Activated T-helper 2 cell treated with anti-CD3 and anti-CD28 coated beads, Interferon-gamma antibody, Interleukin-2, Interleukin-4, amounts not matched to agents 10 μg/mL and 5 μg/mL and 100 μg/mL, durations not matched to agents 14 hours and 24 hours and 36 hours (primary cell): ENCODE measurements at regions of chr11 and their contacts with region 1.

Region 1: GRCh38 chr11:9613118-9613829 is 39.8 kb downstream of the WEE1 start:
- DNase-seq: peak; percentile 81
- H3K4me3 Mint-ChIP-seq: peak overlapping the region; percentile 72
- H3K27ac Mint-ChIP-seq: peak overlapping the region; percentile 98
- H3K4me1 Mint-ChIP-seq: peaks cover 42% of the 10 kb centered on the region
- H3K27me3 Mint-ChIP-seq: no peaks in the 10 kb centered on the region

Region 2: GRCh38 chr11:9534791-9535781 is 78.2 kb before region 1 on chr11:
- intact Hi-C with region 1: loop called (anchors 1 kb)
- DNase-seq: peak; percentile 57
- H3K4me3 Mint-ChIP-seq: no peak overlapping the region
- H3K27ac Mint-ChIP-seq: no peak overlapping the region
- H3K4me1 Mint-ChIP-seq: no peaks in the 10 kb centered on the region
- H3K27me3 Mint-ChIP-seq: no peaks in the 10 kb centered on the region

Region 3: GRCh38 chr11:9573052-9573774 is 40.1 kb before region 1 on chr11 and contains the start of gene WEE1:
- intact Hi-C with region 1: loop called (anchors 1 kb)
- DNase-seq: peak; percentile 98
- H3K4me3 Mint-ChIP-seq: peak within 1 kb of the TSS; percentile 91
- H3K27ac Mint-ChIP-seq: peak within 1 kb of the TSS; percentile 89
- H3K4me1 Mint-ChIP-seq: peaks cover 36% of the 10 kb centered on the region
- H3K27me3 Mint-ChIP-seq: peaks cover 2% of the 10 kb centered on the region
- total RNA-seq, gene WEE1: 48.6 and 49.6 TPM in 2 replicates

Region 4: DNA sequence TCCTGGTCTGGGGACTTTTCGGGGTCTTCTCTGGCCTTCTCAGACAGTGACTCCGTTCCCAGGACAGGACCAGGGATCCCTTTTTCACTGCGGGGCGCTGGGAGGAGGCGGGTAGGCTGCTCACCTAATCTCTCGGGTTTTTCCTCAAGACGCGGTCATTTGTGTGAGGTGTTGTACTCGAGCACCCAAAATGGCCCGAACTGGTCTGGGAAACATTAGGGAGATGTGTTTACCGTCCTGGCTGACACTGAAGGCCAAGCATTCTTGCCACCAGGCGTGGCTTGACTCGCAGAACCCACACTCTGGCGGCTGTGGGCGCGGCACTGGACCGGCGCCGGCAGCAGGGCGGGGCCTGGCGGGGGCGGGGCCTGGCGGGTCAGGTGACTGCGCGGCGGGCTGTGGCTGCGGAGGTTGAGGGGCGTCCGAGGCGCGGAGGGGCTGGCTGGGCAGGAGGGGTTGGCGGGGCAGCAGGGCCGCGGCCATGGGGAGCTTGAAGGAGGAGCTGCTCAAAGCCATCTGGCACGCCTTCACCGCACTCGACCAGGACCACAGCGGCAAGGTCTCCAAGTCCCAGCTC is 50.5 kb after region 1 on chr11 and contains the start of gene SWAP70:
- intact Hi-C with region 1: loop called (anchors 2 kb)
- DNase-seq: peak; percentile 72
- H3K4me3 Mint-ChIP-seq: peak within 1 kb of the TSS; percentile 86
- H3K27ac Mint-ChIP-seq: no peak within 1 kb of the TSS
- H3K4me1 Mint-ChIP-seq: peaks cover 18% of the 10 kb centered on the region
- H3K27me3 Mint-ChIP-seq: peaks cover 37% of the 10 kb centered on the region
- total RNA-seq, gene SWAP70: 8.4 and 11.8 TPM in 2 replicates

Region 5: DNA sequence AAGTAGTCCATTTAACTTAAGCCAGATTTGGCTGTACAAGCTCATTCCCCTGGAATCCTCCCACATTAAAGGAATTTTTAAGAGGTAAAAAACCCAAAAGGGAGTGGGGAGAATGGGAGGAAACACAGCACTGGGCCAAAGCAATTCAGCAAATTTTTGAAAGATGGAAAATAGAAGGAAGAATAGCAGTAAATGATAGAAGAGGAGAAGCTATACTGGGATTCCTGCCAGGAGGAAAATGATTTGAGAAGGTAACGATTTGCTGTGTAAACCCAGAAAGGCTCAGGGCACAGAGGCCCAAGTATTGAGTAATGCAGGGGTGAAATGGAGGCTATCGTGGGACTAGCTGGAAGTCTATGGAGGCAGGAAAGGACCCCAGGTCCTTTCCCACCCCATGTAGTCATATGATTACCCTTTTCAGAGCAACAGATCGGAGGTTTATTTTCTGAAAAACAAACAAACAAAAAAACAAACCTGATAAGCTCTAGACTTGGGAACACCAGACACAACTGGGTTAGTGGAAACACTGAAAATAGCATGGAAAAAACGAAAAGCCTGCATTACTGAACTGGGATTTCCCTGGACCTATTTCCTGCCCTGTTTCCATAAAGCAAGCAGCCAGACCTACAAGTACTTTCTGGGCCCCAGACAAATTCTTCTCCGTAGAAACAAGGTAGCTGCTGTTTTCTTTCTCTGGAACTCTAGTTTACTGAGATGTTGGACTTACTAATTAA is 190.6 kb after region 1 on chr11:
- intact Hi-C with region 1: no loop called
- DNase-seq: no peak
- H3K4me3 Mint-ChIP-seq: no peak overlapping the region
- H3K27ac Mint-ChIP-seq: no peak overlapping the region
- H3K4me1 Mint-ChIP-seq: peaks cover 4% of the 10 kb centered on the region
- H3K27me3 Mint-ChIP-seq: no peaks in the 10 kb centered on the region

Region 6: GRCh38 chr11:9861860-9862725 is 248.8 kb after region 1 on chr11:
- intact Hi-C with region 1: loop called (anchors 2 kb)
- DNase-seq: peak; percentile 20
- H3K4me3 Mint-ChIP-seq: no peak overlapping the region
- H3K27ac Mint-ChIP-seq: no peak overlapping the region
- H3K4me1 Mint-ChIP-seq: peaks cover 32% of the 10 kb centered on the region
- H3K27me3 Mint-ChIP-seq: peaks cover 4% of the 10 kb centered on the region